Heart left ventricle (tissue), 16 donors: ENCODE measurements at regions of chr10 and their contacts with region 1.

Region 1: GRCh38 chr10:126904819-126905686 is at the start of gene DOCK1:
- DNase-seq: peak; percentile 67 to 81 (median 79)
- ATAC-seq: peak; percentile 40 to 89 (median 82)
- H3K4me3 ChIP-seq: peak within 1 kb of the TSS; percentile 67 to 94 (median 84)
- H3K27ac ChIP-seq: peak within 1 kb of the TSS; percentile 75 to 91 (median 86)
- H3K4me1 ChIP-seq: peaks cover 0 to 49% (median 26%) of the 10 kb centered on the region in 12 donors
- H3K27me3 ChIP-seq: no peaks in the 10 kb centered on the region
- CTCF ChIP-seq: no peak
- POLR2A ChIP-seq: no peak
- total RNA-seq, gene DOCK1: 13.4 to 31.6 (median 20.6) TPM

Region 2: GRCh38 chr10:126583552-126584200 is 321.4 kb before region 1 on chr10:
- intact Hi-C with region 1: no loop called
- DNase-seq: peak in 1 of 5 donors; percentile 32
- ATAC-seq: peak in 2 of 4 donors; percentile 33 to 56
- H3K4me3 ChIP-seq: no peak overlapping the region
- H3K27ac ChIP-seq: no peak overlapping the region
- H3K4me1 ChIP-seq: no peaks in the 10 kb centered on the region
- H3K27me3 ChIP-seq: peaks cover 0 to 6% (median 0%) of the 10 kb centered on the region in 9 donors
- CTCF ChIP-seq: no peak
- POLR2A ChIP-seq: no peak

Region 3: GRCh38 chr10:126972620-126973414 is 67.8 kb after region 1 on chr10:
- intact Hi-C with region 1: loop called in 1 of 10 experiments (anchors 10 kb)
- DNase-seq: no peak
- ATAC-seq: peak in 3 of 4 donors; percentile 39 to 69 (median 56)
- H3K4me3 ChIP-seq: peak overlapping the region in 1 of 12 donors; percentile 11
- H3K27ac ChIP-seq: peak overlapping the region in 4 of 12 donors; percentile 14 to 64 (median 30)
- H3K4me1 ChIP-seq: peaks cover 0 to 25% (median 10%) of the 10 kb centered on the region in 12 donors
- H3K27me3 ChIP-seq: no peaks in the 10 kb centered on the region
- CTCF ChIP-seq: no peak
- POLR2A ChIP-seq: no peak

Region 4: GRCh38 chr10:126993235-126993634 is 88.2 kb after region 1 on chr10:
- intact Hi-C with region 1: loop called in 1 of 10 experiments (anchors 5 kb)
- DNase-seq: no peak
- ATAC-seq: peak in 1 of 4 donors; percentile 45
- H3K4me3 ChIP-seq: no peak overlapping the region
- H3K27ac ChIP-seq: no peak overlapping the region
- H3K4me1 ChIP-seq: peaks cover 0 to 11% (median 1%) of the 10 kb centered on the region in 12 donors
- H3K27me3 ChIP-seq: no peaks in the 10 kb centered on the region
- CTCF ChIP-seq: no peak
- POLR2A ChIP-seq: no peak

Region 5: DNA sequence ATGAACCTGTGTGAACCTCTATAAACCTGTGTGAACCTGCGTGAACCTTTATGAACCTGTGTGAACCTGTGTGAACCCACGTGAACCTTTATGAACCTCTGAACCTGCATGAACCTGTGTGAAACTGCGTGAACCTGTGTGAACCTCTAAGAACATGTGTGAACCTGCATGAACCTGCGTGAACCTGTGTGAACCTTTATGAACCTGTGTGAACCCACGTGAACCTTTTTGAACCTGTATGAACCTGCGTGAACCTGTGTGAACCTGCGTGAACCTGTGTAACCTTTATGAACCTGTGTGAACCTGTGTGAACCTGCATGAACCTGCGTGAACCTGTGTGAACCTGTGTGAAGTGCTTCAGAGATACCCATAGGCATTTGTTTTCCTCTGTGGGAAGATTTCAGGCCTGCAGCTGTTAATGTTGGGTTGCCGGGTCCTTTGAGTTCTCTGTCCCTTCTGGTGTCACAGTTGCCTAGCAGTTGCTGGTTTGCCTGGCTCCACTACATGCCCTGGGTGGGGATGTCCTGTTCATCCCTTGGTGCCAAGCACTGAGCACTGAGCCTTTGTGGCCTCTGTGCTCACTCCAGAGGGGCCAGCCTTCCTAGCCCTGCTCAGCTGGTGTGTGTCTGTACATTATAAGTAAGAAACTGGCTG is 98.1 kb after region 1 on chr10:
- intact Hi-C with region 1: loop called in 1 of 10 experiments (anchors 10 kb)
- DNase-seq: no peak
- ATAC-seq: no peak
- H3K4me3 ChIP-seq: no peak overlapping the region
- H3K27ac ChIP-seq: no peak overlapping the region
- H3K4me1 ChIP-seq: no peaks in the 10 kb centered on the region
- H3K27me3 ChIP-seq: no peaks in the 10 kb centered on the region
- CTCF ChIP-seq: no peak
- POLR2A ChIP-seq: no peak

Region 6: DNA sequence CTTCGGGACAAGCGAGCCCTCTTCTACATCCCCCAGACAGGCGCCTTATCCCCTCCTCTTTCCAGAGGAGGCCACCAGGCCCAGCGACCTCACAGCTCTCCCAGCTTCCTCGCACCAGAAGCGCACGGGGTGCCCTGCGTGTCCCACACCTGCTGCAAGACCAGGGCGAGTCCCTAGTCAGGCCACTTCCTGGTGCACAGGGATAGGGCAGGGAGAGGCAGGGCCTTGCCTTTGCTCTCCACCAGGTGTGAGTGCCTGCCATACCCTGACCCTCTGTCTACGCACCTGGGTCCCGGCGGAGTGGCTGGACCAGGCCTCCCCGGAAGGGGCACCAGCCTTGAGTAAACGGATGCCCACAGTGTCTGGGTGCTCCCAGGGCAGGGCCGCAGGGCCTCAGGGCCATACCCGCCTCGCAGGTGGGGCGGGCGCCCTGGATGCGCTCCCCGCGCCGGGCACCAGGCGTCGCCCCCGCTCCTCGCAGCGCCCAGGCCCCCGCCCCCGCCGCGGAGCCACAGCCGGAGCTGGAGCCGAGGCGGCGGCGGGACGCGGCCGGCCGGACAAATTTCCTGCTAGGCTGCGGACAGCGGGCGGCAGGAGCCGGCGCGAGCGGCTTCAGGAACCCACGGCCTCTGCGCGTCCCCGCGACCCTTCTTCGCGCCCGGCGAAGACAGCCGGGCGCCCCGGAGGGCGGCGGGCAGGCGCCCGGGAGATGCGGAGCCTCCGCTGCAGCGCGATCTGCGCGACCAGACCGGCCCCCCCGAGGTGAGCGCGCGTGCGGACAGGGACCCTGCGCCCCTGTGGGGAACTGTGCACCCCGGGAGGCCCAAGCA is 1001.7 kb after region 1 on chr10 and contains the start of gene PTPRE:
- intact Hi-C with region 1: no loop called
- DNase-seq: peak; percentile 83 to 91 (median 84)
- ATAC-seq: peak; percentile 53 to 90 (median 79)
- H3K4me3 ChIP-seq: peak within 1 kb of the TSS; percentile 58 to 92 (median 76)
- H3K27ac ChIP-seq: peak within 1 kb of the TSS; percentile 85 to 98 (median 91)
- H3K4me1 ChIP-seq: peaks cover 0 to 47% (median 29%) of the 10 kb centered on the region in 12 donors
- H3K27me3 ChIP-seq: no peaks in the 10 kb centered on the region
- CTCF ChIP-seq: peak; percentile 55 to 96 (median 84)
- POLR2A ChIP-seq: no peak
- total RNA-seq, gene PTPRE: 13.9 to 55.0 (median 26.8) TPM